Activated CD4-positive, alpha-beta T cell treated with anti-CD3 and anti-CD28 coated beads for 36 hours (primary cell): ENCODE measurements at regions of chr1 and their contacts with region 1.

Region 1: GRCh38 chr1:205211169-205211838 is at the start of gene DSTYK:
- DNase-seq: peak; percentile 97
- ATAC-seq: peak; percentile 90
- H3K4me3 Mint-ChIP-seq: peak within 1 kb of the TSS; percentile 97
- H3K27ac Mint-ChIP-seq: peak within 1 kb of the TSS; percentile 95
- H3K4me1 Mint-ChIP-seq: peaks cover 54% of the 10 kb centered on the region
- H3K27me3 Mint-ChIP-seq: no peaks in the 10 kb centered on the region
- total RNA-seq, gene DSTYK: 9.4 to 12.3 TPM

Region 2: GRCh38 chr1:205172729-205173366 is 38.5 kb before region 1 on chr1:
- CTCF ChIA-PET with region 1: no interaction called
- POLR2A ChIA-PET with region 1: no interaction called
- intact Hi-C with region 1: loop called (anchors 2 to 5 kb)
- DNase-seq: peak; percentile 20
- ATAC-seq: peak; percentile 92
- H3K4me3 Mint-ChIP-seq: no peak overlapping the region
- H3K27ac Mint-ChIP-seq: peak overlapping the region; percentile 61
- H3K4me1 Mint-ChIP-seq: peaks cover 31% of the 10 kb centered on the region
- H3K27me3 Mint-ChIP-seq: no peaks in the 10 kb centered on the region

Region 3: GRCh38 chr1:205199090-205199930 is 12.0 kb before region 1 on chr1:
- CTCF ChIA-PET with region 1: interaction called, 4 read pairs
- POLR2A ChIA-PET with region 1: interaction called, 6 read pairs
- intact Hi-C with region 1: loop called in 1 of 2 experiments (anchors 1 kb)
- DNase-seq: peak; percentile 67
- ATAC-seq: peak; percentile 63
- H3K4me3 Mint-ChIP-seq: peak overlapping the region; percentile 50
- H3K27ac Mint-ChIP-seq: peak overlapping the region; percentile 94
- H3K4me1 Mint-ChIP-seq: peaks cover 68% of the 10 kb centered on the region
- H3K27me3 Mint-ChIP-seq: no peaks in the 10 kb centered on the region

Region 4: DNA sequence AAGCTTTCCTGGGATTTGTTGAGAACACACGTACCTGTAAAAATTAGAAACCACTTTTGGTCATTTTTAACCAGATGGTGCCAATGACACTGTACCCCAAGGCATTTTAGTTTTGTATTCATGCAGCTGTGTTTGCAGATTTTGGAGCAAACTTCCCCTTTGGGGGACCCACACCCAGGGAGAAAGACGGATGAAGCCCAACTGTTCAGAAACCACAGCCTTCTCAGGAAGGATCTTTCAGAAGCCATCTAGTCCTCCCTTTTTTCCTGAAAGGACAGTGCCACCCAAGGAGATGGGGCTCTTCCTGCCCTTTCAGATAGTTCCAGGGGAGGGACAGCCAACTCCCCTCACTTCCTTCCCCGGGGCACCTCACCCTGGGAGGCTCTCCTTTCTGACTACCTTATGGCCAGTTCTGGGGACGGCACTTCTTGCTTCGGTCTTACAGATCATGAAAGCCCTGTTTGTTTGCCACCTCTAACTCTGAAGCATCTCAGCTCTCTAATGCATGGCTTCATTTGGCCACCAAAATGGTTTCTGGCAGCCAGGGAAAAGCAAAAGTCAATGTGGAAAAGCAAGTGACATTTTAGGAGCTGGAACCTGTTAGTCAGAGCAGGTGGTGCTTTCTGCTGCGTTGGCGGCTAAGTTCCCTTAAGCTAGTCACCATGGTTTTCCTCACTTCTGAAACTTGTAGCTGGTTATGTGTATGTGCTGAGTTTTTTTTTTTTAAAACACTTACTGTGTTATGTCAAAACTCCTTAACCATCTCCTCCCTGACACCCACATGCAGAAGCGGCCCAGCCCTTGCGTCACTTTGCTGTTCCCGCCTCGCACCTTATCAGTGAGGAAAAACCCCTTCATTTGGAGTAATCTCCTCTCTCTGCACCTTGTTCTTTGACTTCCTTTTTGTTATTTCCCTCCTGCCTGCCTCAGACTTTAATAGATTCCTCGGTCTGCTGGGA is 26.5 kb after region 1 on chr1:
- CTCF ChIA-PET with region 1: no interaction called
- POLR2A ChIA-PET with region 1: interaction called, 6 read pairs
- intact Hi-C with region 1: loop called in 1 of 2 experiments (anchors 1 kb)
- DNase-seq: peak; percentile 82
- ATAC-seq: peak; percentile 89
- H3K4me3 Mint-ChIP-seq: peak overlapping the region; percentile 56
- H3K27ac Mint-ChIP-seq: peak overlapping the region; percentile 95
- H3K4me1 Mint-ChIP-seq: peaks cover 58% of the 10 kb centered on the region
- H3K27me3 Mint-ChIP-seq: no peaks in the 10 kb centered on the region

Region 5: GRCh38 chr1:205321164-205321958 is 110.1 kb after region 1 on chr1 and contains the start of gene NUAK2:
- CTCF ChIA-PET with region 1: interaction called, 3 read pairs
- POLR2A ChIA-PET with region 1: no interaction called
- intact Hi-C with region 1: loop called in 1 of 2 experiments (anchors 5 kb)
- DNase-seq: peak; percentile 90
- ATAC-seq: peak; percentile 85
- H3K4me3 Mint-ChIP-seq: peak within 1 kb of the TSS; percentile 88
- H3K27ac Mint-ChIP-seq: peak within 1 kb of the TSS; percentile 90
- H3K4me1 Mint-ChIP-seq: peaks cover 65% of the 10 kb centered on the region
- H3K27me3 Mint-ChIP-seq: no peaks in the 10 kb centered on the region
- total RNA-seq, gene NUAK2: 2.3 to 2.7 TPM

Region 6: DNA sequence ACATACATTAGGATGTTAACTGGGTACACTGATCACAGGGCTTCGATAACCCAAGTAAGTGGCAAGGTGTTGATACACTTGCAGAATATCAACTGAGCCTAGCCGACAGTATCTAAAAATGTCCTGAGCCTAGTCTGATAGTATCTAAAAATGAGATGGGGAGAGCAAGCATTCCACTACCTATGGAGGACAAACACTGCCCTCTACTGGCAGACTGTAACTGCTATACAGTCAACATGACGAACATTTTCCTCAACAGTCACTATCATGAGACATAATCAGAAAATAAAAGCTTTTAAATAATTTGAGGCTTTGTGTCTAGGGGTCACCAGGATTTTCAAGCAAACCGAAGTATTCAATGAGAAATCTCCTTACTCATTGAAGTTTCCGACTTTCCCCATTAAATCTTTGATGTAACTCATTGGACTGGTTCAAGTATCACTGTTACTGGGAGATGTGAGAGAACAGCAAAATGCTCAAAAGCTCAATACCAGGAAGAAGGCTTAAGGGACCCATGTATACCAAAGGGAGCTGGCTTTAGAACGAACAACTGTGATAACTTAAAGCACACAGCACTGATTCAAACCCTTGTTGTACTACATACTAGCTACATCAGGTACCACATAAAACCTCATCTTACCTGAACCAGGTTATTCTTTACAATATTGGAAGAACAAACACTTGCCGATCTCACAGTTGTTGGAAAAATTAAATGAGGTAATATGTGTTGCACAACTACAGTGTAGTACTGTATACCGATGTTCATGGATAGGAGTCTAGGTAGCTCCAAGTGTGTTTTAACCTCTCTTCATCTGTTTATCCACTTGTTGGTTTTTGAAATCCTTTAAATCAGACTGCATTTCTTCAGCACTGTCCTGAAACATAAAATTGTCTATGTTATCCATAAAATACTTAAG is 500.1 kb after region 1 on chr1:
- CTCF ChIA-PET with region 1: no interaction called
- POLR2A ChIA-PET with region 1: no interaction called
- intact Hi-C with region 1: no loop called
- DNase-seq: peak; percentile 78
- ATAC-seq: peak; percentile 90
- H3K4me3 Mint-ChIP-seq: no peak overlapping the region
- H3K27ac Mint-ChIP-seq: peak overlapping the region; percentile 43
- H3K4me1 Mint-ChIP-seq: peaks cover 13% of the 10 kb centered on the region
- H3K27me3 Mint-ChIP-seq: no peaks in the 10 kb centered on the region

Region 7: GRCh38 chr1:206563367-206564207 is 1352.3 kb after region 1 on chr1:
- CTCF ChIA-PET with region 1: no interaction called
- POLR2A ChIA-PET with region 1: no interaction called
- intact Hi-C with region 1: loop called in 1 of 2 experiments (anchors 10 kb)
- DNase-seq: peak; percentile 22
- ATAC-seq: peak; percentile 4
- H3K4me3 Mint-ChIP-seq: peak overlapping the region; percentile 95
- H3K27ac Mint-ChIP-seq: peak overlapping the region; percentile 99
- H3K4me1 Mint-ChIP-seq: peaks cover 87% of the 10 kb centered on the region
- H3K27me3 Mint-ChIP-seq: no peaks in the 10 kb centered on the region